ENCODE measurements at regions of chr11 and their contacts with region 1.

Region 1: GRCh38 chr11:2305140-2305840 is 3.5 kb downstream of the TSPAN32 start:
- DNase-seq: peak; percentile 93
- ATAC-seq: peak; percentile 85
- H3K4me3 Mint-ChIP-seq: no peak overlapping the region
- H3K27ac Mint-ChIP-seq: no peak overlapping the region
- H3K4me1 Mint-ChIP-seq: peaks cover 4% of the 10 kb centered on the region
- H3K27me3 Mint-ChIP-seq: no peaks in the 10 kb centered on the region
- CTCF ChIP-seq: peak; percentile 74

Region 2: GRCh38 chr11:2166091-2166851 is 139.0 kb before region 1 on chr11:
- CTCF ChIA-PET with region 1: interaction called, 10 read pairs
- POLR2A ChIA-PET with region 1: no interaction called
- DNase-seq: peak; percentile 75
- ATAC-seq: peak; percentile 76
- H3K4me3 Mint-ChIP-seq: no peak overlapping the region
- H3K27ac Mint-ChIP-seq: no peak overlapping the region
- H3K4me1 Mint-ChIP-seq: no peaks in the 10 kb centered on the region
- H3K27me3 Mint-ChIP-seq: no peaks in the 10 kb centered on the region
- CTCF ChIP-seq: no peak; the same call in 1 of the 2 replicates

Region 3: GRCh38 chr11:2196970-2197770 is 108.1 kb before region 1 on chr11:
- CTCF ChIA-PET with region 1: interaction called, 58 read pairs
- POLR2A ChIA-PET with region 1: no interaction called
- DNase-seq: peak; percentile 87
- ATAC-seq: peak; percentile 87
- H3K4me3 Mint-ChIP-seq: no peak overlapping the region
- H3K27ac Mint-ChIP-seq: no peak overlapping the region
- H3K4me1 Mint-ChIP-seq: no peaks in the 10 kb centered on the region
- H3K27me3 Mint-ChIP-seq: peaks cover 13% of the 10 kb centered on the region
- CTCF ChIP-seq: peak; percentile 56; the same call in 1 of the 2 replicates

Region 4: GRCh38 chr11:2277008-2277346 is 28.3 kb before region 1 on chr11:
- CTCF ChIA-PET with region 1: interaction called, 11 read pairs
- POLR2A ChIA-PET with region 1: interaction called, 3 read pairs
- DNase-seq: no peak
- ATAC-seq: no peak
- H3K4me3 Mint-ChIP-seq: no peak overlapping the region
- H3K27ac Mint-ChIP-seq: no peak overlapping the region
- H3K4me1 Mint-ChIP-seq: peaks cover 16% of the 10 kb centered on the region
- H3K27me3 Mint-ChIP-seq: peaks cover 62% of the 10 kb centered on the region
- CTCF ChIP-seq: no peak

Region 5: GRCh38 chr11:2382936-2383851 is 77.9 kb after region 1 on chr11:
- CTCF ChIA-PET with region 1: interaction called, 27 read pairs
- POLR2A ChIA-PET with region 1: interaction called, 3 read pairs
- DNase-seq: no peak
- ATAC-seq: no peak; the same call in 1 of the 2 replicates
- H3K4me3 Mint-ChIP-seq: no peak overlapping the region
- H3K27ac Mint-ChIP-seq: no peak overlapping the region; the same call in 1 of the 2 replicates
- H3K4me1 Mint-ChIP-seq: peaks cover 18% of the 10 kb centered on the region
- H3K27me3 Mint-ChIP-seq: no peaks in the 10 kb centered on the region
- CTCF ChIP-seq: no peak

Region 6: GRCh38 chr11:2420502-2421225 is 115.4 kb after region 1 on chr11:
- CTCF ChIA-PET with region 1: interaction called, 398 read pairs
- POLR2A ChIA-PET with region 1: interaction called, 4 read pairs
- DNase-seq: peak; percentile 84
- ATAC-seq: peak; percentile 94
- H3K4me3 Mint-ChIP-seq: no peak overlapping the region
- H3K27ac Mint-ChIP-seq: no peak overlapping the region
- H3K4me1 Mint-ChIP-seq: no peaks in the 10 kb centered on the region
- H3K27me3 Mint-ChIP-seq: peaks cover 4% of the 10 kb centered on the region
- CTCF ChIP-seq: peak; percentile 78

Region 7: DNA sequence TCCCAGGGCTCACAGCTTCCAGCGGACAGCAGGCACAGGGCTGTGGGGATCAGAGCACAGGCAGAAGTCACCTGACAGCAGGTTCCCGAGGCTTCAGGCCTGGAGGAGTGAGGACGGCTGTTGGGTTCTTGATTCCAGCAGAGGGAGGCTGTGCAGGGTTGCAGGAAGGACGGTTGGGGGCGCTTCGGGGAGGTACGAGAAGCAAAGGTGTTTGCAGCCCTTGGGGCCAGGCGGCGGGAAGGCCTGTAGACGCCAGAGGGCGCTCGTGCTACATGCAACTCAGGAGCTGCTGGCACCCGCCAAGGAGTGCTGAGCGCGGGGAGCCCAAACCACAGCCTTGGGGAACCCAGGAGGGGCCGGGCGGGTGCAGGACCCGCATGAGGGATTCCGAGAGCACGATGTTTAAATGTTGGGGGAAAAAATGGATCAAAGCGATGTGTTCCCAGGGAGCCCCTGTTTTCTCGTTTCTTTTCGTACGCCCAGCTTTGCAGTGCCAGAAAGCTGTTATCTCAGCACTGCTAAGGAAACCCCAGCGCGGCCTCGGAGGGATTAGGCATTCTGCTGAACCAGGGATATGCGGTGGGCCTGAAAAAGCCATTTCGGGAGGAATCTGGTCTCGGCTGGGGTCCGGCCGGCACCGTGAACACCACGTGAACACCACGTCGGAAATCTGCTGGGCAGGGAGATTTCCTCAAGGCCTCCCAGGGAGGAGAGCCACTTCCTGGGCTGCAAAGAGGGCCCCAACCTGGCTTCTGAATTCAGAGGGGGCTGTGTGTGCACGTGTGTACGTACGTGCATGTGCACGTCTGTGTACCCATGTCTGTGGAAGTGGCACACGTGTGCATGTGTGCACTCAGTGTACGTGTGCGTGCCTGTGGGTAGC is 227.7 kb after region 1 on chr11:
- CTCF ChIA-PET with region 1: interaction called, 19 read pairs
- POLR2A ChIA-PET with region 1: no interaction called
- DNase-seq: peak; percentile 99
- ATAC-seq: peak; percentile 89
- H3K4me3 Mint-ChIP-seq: no peak overlapping the region
- H3K27ac Mint-ChIP-seq: no peak overlapping the region
- H3K4me1 Mint-ChIP-seq: peaks cover 10% of the 10 kb centered on the region
- H3K27me3 Mint-ChIP-seq: peaks cover 45% of the 10 kb centered on the region
- CTCF ChIP-seq: peak; percentile 99

Measured in WTC11 (cell line).